Activated CD8-positive, alpha-beta T cell treated with anti-CD3 and anti-CD28 coated beads for 36 hours (primary cell): ENCODE measurements at regions of chr15 and their contacts with region 1.

Region 1: DNA sequence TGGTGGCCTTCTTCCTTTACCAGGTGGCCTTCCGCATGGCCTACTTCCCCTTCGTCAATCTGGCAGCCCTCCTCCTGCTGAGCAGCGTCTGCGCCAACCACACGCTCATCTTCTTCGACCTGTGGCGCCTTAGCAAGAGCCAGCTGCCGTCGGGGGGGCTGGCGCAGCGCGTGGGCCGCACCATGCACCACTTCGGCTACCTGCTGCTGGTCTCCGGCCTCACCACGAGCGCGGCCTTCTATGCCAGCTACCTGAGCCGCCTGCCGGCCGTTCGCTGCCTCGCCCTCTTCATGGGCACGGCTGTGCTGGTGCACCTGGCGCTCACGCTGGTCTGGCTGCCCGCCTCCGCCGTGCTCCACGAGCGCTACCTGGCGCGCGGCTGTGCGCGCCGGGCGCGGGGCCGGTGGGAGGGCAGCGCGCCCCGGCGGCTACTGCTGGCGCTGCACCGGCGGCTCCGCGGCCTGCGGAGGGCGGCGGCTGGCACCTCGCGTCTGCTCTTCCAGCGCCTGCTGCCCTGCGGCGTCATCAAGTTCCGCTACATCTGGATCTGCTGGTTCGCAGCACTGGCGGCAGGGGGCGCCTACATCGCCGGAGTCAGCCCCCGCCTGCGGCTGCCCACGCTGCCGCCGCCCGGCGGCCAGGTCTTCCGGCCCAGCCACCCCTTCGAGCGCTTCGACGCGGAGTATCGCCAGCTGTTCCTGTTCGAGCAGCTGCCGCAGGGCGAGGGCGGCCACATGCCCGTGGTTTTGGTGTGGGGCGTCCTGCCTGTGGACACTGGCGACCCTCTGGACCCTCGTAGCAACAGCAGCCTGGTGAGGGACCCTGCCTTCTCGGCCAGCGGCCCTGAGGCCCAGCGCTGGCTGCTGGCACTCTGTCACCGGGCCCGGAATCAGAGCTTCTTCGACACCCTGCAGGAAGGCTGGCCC is 9.9 kb downstream of the DISP2 start:
- DNase-seq: peak; percentile 92
- ATAC-seq: peak; percentile 98
- H3K4me3 Mint-ChIP-seq: peak overlapping the region; percentile 82
- H3K27ac Mint-ChIP-seq: peak overlapping the region; percentile 79
- H3K4me1 Mint-ChIP-seq: peaks cover 20% of the 10 kb centered on the region
- H3K27me3 Mint-ChIP-seq: no peaks in the 10 kb centered on the region
- CTCF ChIP-seq: peak; percentile 96

Region 2: DNA sequence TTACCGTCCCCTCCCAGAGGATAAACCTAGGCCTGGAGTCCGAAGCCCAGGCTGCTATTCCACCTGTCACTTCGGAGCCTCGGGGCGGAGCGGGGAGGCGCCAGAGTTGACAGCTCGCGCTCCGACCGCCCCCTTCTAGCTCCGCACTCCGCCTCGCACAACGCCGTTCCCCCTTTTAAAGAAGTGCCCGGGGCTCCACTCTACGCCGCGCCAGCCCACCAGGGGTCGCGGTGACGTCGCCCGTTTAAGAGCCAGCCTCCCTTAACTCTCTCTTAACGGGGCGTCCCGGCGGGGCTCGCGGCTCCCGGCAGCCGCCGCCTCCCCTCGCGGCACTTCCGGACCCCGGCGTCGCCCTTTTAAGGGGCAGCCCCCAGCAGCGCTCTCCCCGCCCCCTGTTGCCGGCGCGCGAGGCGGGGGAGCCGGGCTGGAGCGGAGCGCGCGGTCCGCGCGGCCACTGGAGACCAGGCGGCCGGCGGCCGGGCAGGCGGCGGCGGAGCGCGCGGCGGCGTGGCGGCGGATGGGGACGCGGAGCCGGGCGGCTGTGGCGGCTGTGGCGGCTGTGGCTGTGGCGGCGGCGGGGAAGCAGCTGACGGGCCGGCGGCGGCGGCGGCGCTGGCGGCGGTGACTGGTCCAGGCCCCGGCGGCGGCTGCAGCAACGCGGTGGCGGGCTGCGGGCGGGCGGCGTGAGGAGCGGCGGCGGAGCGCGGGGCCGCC is 44.6 kb before region 1 on chr15 and contains the start of gene INAFM2:
- CTCF ChIA-PET with region 1: interaction called, 10 read pairs
- POLR2A ChIA-PET with region 1: no interaction called
- intact Hi-C with region 1: no loop called
- DNase-seq: peak; percentile 95
- ATAC-seq: peak; percentile 94
- H3K4me3 Mint-ChIP-seq: peak within 1 kb of the TSS; percentile 71
- H3K27ac Mint-ChIP-seq: no peak within 1 kb of the TSS
- H3K4me1 Mint-ChIP-seq: peaks cover 31% of the 10 kb centered on the region
- H3K27me3 Mint-ChIP-seq: no peaks in the 10 kb centered on the region
- CTCF ChIP-seq: peak; percentile 64
- total RNA-seq, gene INAFM2: 15.0 to 16.9 TPM

Region 3: GRCh38 chr15:40357723-40358470 is 10.1 kb before region 1 on chr15 and contains the start of gene DISP2:
- CTCF ChIA-PET with region 1: interaction called, 28 read pairs
- POLR2A ChIA-PET with region 1: interaction called, 5 read pairs
- intact Hi-C with region 1: no loop called
- DNase-seq: peak; percentile 87
- ATAC-seq: peak; percentile 94
- H3K4me3 Mint-ChIP-seq: peak within 1 kb of the TSS; percentile 71
- H3K27ac Mint-ChIP-seq: no peak within 1 kb of the TSS
- H3K4me1 Mint-ChIP-seq: peaks cover 7% of the 10 kb centered on the region
- H3K27me3 Mint-ChIP-seq: no peaks in the 10 kb centered on the region
- CTCF ChIP-seq: no peak
- total RNA-seq, gene DISP2: 0.09 to 0.20 TPM

Region 4: DNA sequence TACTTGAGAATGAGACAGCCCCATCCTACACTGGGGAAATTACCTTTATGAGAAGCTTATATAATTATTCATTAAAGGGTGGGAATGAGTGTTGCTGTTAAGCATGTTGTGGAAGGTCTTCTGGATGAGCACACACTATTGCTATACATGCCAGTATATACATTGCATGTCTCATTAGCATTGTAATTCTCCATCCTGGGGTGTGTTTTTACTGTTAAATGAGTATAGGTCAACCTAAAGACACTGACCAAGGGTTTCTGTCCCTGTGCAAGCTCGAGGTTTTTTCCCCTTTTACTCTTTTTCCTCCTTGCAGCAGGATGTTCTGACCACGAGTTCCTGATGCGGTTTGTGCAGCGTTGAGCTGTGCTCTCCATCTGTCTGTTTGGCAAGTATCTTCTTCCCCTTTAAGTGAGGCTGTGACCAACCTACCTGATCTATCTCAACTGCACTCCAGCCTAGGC is 30.5 kb after region 1 on chr15:
- CTCF ChIA-PET with region 1: interaction called, 33 read pairs
- POLR2A ChIA-PET with region 1: interaction called, 3 read pairs
- intact Hi-C with region 1: no loop called
- DNase-seq: peak; percentile 52
- ATAC-seq: peak; percentile 95
- H3K4me3 Mint-ChIP-seq: peak overlapping the region; percentile 41
- H3K27ac Mint-ChIP-seq: peak overlapping the region; percentile 57
- H3K4me1 Mint-ChIP-seq: peaks cover 23% of the 10 kb centered on the region
- H3K27me3 Mint-ChIP-seq: no peaks in the 10 kb centered on the region
- CTCF ChIP-seq: no peak

Region 5: DNA sequence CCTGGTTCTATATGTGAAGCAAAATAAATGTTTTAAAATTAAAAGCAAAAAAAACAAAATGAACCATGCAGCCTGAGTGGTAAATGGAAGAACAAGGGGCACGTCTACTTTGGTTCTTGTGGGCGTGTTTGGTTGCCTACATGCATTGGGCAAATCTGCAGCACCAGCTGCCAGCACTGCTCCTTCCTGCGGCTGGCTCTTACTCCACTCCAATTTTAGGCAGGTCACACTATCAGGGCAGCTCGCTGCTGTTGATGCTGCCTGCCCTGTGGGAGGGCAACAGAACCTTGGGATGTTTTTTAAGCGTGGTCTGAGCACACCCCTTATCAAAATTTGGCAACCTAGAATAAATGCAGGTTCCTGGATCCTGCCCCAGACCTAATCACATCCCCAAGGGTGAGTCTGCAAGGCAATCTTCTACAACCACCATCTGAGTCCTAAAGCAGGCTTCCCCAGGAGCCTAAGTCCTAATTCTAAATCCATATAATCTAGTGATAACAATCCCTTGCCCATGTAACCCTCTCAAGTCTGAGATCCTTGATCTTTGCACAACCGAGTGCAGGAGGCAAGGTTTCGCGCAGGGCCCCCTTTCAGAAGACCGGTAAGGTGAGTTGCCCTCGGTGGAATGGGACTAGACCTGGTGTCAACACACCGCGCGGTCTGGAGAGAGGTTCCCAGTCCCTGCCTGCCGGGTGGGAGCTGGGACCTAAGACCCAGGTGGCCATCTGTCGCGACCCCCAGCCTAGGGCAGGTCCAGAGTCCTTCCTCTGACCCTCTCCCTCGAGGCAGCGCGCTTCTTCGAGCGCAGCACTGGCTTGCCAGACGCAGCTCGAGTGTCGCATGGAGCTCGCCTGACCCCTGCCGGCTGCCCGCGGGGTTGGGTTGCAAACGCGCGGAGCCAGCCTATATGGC is 53.6 kb after region 1 on chr15:
- CTCF ChIA-PET with region 1: interaction called, 74 read pairs
- POLR2A ChIA-PET with region 1: interaction called, 7 read pairs
- intact Hi-C with region 1: no loop called
- DNase-seq: peak; percentile 86
- ATAC-seq: peak; percentile 99
- H3K4me3 Mint-ChIP-seq: no peak overlapping the region
- H3K27ac Mint-ChIP-seq: no peak overlapping the region
- H3K4me1 Mint-ChIP-seq: peaks cover 5% of the 10 kb centered on the region
- H3K27me3 Mint-ChIP-seq: no peaks in the 10 kb centered on the region
- CTCF ChIP-seq: peak; percentile 96